Aorta (tissue), 5 donors: ENCODE measurements at regions of chr6 and their contacts with region 1.

Region 1: DNA sequence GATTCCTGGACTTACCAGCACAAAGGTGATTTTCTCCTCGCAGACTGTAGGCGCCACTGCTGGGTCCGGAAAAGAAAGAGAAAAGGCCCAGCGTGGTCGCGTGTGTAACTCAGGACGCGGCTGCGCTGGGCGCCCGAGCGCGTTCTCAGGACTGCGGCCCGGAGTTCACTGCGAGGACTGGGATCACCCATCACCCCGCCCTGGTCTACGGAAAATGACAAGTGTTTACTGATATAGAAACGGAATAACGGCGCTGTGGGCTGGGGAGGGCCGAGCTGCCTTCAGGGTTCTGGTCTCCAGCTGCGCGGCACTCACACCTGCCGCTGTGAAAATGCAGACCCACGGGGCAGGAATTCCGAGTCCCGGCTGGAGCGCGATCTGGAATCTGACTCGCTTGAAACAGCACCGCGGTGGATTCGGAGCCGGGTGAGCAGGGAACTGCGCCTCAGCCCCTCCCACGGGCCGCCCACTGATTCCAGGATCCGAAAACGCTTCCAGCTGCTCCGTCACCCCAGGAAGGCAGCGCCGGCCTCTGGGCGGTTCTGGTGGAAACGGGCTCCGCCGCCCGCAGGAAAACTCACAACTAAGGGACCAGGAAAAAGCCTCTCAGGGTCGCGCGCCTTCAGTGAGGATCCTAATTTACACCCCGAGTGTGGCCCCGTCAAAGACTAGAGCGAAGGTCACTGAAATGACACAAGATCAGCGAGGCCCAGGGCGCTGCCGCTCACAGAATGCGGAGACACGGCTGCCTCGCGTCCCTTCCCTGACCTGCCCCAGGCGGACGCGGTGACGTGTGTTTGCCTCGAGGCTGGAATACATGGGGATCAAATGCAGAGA is 34.5 kb downstream of the HLA-A start:
- DNase-seq: peak; percentile 92 to 98
- ATAC-seq: peak; percentile 97
- H3K4me3 ChIP-seq: peak overlapping the region; percentile 14 to 28
- H3K27ac ChIP-seq: peak overlapping the region; percentile 8 to 96
- H3K4me1 ChIP-seq: no peaks in the 10 kb centered on the region
- H3K27me3 ChIP-seq: no peaks in the 10 kb centered on the region

Region 2: DNA sequence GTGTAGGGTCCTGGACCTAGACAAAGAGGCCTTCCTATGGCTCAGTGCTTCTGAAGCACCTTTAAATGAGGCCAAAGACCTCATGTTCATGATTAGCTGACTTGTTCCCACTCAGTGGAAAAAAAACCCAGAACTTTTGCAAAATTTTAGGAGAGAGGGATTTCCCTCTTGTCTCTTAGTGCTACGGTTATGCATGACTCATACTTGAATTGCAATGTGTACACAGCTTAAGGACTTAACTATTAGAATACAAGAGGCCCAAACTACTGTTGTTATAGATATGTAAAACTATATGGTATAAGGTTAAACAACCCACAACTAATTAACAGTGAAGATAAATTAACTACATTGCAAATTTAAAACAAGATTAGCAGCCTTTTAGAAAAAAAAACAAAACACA is 66.8 kb before region 1 on chr6:
- intact Hi-C with region 1: no loop called
- DNase-seq: no peak
- ATAC-seq: no peak
- H3K4me3 ChIP-seq: no peak overlapping the region
- H3K27ac ChIP-seq: no peak overlapping the region
- H3K4me1 ChIP-seq: no peaks in the 10 kb centered on the region
- H3K27me3 ChIP-seq: no peaks in the 10 kb centered on the region

Region 3: DNA sequence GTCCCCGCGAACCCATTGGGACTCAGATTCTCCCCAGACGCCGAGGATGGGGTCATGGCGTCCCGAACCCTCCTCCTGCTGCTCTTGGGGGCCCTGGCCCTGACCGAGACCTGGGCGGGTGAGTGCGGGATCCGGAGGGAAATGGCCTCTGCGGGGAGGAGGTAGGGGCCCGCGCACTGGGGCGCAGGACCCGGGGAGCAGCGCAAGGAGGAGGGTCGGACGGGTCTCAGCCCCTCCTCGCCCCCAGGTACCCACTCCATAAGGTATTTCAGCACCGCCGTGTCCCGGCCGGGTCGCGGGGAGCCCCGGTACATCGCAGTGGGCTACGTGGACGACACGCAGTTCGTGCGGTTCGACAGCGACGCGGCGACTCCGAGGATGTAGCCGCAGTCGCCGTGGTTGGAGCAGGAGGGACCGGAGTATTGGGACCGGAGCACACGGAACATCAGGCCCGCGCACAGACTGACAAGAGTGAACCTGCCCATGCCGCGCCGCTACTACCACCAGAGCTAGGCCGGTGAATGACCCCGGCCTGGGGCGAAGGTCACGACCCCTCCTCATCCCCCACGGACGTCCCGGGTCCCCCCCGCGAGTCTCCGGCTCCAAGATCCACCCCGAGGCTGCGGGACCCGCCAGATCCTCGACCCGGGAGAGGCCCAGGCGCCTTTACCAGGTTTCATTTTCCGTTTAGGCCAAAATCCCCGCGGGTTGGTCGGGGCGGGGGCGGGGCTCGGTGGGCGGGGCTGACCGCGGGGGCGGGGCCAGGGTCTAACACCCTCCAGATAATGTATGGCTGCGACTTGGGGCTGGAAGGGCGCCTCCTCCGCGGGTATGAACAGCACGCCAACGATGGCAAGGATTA is 50.2 kb before region 1 on chr6:
- intact Hi-C with region 1: loop called in 1 of 2 experiments (anchors 1 kb)
- DNase-seq: peak; percentile 89 to 91
- ATAC-seq: peak; percentile 93
- H3K4me3 ChIP-seq: peak overlapping the region; percentile 38 to 56
- H3K27ac ChIP-seq: peak overlapping the region in 1 of 2 donors; percentile 72
- H3K4me1 ChIP-seq: no peaks in the 10 kb centered on the region
- H3K27me3 ChIP-seq: no peaks in the 10 kb centered on the region

Region 4: GRCh38 chr6:29942275-29943052 is 34.3 kb before region 1 on chr6 and contains the start of gene HLA-A:
- intact Hi-C with region 1: loop called in 1 of 2 experiments (anchors 5 kb)
- DNase-seq: peak; percentile 96 to 97
- ATAC-seq: peak; percentile 99
- H3K4me3 ChIP-seq: peak within 1 kb of the TSS; percentile 64 to 91
- H3K27ac ChIP-seq: peak within 1 kb of the TSS; percentile 69 to 71
- H3K4me1 ChIP-seq: no peaks in the 10 kb centered on the region
- H3K27me3 ChIP-seq: no peaks in the 10 kb centered on the region
- total RNA-seq, gene HLA-A: 468 to 599 TPM